Mammary epithelial cell (primary cell): ENCODE measurements at regions of chr13 and their contacts with region 1.

Region 1: DNA sequence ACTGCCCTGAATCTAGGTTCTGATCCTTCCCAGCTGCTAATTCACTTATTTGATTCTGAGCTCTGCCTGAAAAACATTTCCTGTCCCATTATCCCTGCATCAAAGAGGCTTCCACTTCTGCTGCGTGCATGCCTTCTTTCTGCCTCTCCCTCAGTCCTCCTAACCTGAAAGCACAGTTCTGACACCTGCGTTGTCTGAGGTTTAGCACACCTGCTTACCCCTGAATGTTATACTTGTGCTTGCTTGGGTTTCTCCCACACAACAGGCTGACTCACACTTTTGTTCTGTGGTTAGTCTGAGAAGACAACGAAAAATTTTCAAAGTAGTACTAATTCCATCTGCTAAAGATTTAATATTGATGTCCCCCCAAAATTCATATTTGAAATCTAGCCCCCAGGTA is 3.1 kb upstream of the SOHLH2 start:
- DNase-seq: peak; percentile 76
- H3K4me3 ChIP-seq: no peak overlapping the region
- H3K27ac ChIP-seq: no peak overlapping the region
- H3K4me1 ChIP-seq: no peaks in the 10 kb centered on the region
- H3K27me3 ChIP-seq: peaks cover 3% of the 10 kb centered on the region
- CTCF ChIP-seq: no peak

Region 2: DNA sequence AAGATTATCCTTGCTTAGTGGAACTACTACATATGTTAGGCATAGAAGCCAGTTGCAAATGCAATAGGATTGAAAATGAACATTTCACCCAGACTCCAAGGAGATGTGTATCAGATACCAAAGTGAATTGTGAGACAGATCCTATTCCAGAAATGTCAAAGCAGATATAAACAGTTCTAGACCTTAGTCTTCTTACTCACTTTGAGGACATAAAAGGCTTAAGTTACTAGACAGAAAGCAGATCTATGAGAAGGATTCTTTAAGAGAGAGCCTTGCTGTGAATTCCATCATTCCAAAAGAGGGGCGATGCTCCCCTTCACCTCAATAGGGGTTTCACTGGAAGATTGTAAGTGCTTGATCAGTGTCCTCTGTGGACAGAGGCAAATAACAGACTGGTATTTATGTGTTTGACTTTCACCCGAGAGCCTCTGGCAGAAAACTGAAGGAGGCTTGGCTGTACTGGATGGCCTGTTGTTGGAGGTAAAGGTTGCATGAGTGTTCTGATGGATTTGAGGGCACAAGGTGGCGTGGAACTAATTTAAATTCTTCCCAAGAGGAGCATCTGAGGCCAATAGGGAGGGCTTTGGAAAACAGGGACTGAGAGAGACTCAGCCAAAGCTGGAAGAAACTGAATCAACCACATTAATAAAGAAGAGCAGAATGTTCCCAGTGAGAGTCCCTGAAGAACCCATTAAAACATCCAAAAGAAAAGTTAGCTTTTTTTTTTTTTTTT is 281.0 kb before region 1 on chr13:
- CTCF ChIA-PET with region 1: no interaction called
- dilution Hi-C with region 1: no loop called
- in situ Hi-C with region 1: no loop called
- intact Hi-C with region 1: no loop called
- DNase-seq: no peak
- H3K4me3 ChIP-seq: no peak overlapping the region
- H3K27ac ChIP-seq: no peak overlapping the region
- H3K4me1 ChIP-seq: no peaks in the 10 kb centered on the region
- H3K27me3 ChIP-seq: no peaks in the 10 kb centered on the region
- CTCF ChIP-seq: no peak

Region 3: DNA sequence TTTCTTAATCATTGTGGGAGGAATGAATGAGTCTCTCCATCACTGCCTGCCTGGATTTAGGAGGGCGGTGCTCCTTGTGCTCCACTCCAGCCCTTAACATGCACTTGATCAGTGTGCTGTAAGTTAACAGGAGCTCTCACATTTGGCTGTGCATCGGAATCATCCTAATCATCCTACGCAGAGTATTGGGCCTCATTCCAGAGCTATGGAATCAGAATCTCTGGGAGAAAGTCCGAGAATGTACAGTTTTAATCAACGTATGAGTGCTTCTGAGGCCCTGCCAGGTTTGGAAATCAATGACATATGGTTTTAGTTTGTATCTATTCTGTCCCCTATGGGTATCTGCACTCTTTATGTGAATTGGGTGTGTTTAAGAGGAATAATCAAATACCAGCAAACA is 51.4 kb before region 1 on chr13:
- CTCF ChIA-PET with region 1: no interaction called
- dilution Hi-C with region 1: loop called (anchors 5 kb)
- in situ Hi-C with region 1: no loop called
- intact Hi-C with region 1: no loop called
- DNase-seq: no peak
- H3K4me3 ChIP-seq: no peak overlapping the region
- H3K27ac ChIP-seq: no peak overlapping the region
- H3K4me1 ChIP-seq: peaks cover 11% of the 10 kb centered on the region
- H3K27me3 ChIP-seq: no peaks in the 10 kb centered on the region
- CTCF ChIP-seq: no peak

Region 4: GRCh38 chr13:36275190-36276002 is 57.9 kb after region 1 on chr13:
- CTCF ChIA-PET with region 1: no interaction called
- dilution Hi-C with region 1: no loop called
- in situ Hi-C with region 1: no loop called
- intact Hi-C with region 1: no loop called
- DNase-seq: no peak
- H3K4me3 ChIP-seq: no peak overlapping the region
- H3K27ac ChIP-seq: no peak overlapping the region
- H3K4me1 ChIP-seq: no peaks in the 10 kb centered on the region
- H3K27me3 ChIP-seq: no peaks in the 10 kb centered on the region
- CTCF ChIP-seq: peak; percentile 54 to 63

Region 5: DNA sequence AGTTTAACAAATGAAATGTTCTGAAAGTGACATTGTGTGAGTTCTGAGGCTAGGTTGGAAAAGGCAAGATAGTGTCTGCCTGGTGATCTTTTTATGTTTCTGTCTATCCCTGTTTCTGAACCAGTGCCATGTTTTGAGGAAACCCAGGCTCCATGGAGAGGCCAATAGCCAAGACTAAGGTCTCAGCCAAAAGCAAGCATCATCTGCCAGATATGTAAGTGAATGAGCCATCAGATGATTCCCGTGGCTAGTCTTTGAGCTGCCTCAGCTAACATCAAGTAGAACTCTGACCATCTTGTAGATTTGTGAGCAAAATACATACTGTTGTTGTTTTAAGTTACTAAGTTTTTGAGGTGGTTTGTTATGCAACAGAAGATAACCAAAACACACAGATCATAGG is 195.3 kb after region 1 on chr13:
- CTCF ChIA-PET with region 1: no interaction called
- dilution Hi-C with region 1: no loop called
- in situ Hi-C with region 1: no loop called
- intact Hi-C with region 1: no loop called
- DNase-seq: no peak
- H3K4me3 ChIP-seq: no peak overlapping the region
- H3K27ac ChIP-seq: no peak overlapping the region
- H3K4me1 ChIP-seq: peaks cover 13% of the 10 kb centered on the region
- H3K27me3 ChIP-seq: no peaks in the 10 kb centered on the region
- CTCF ChIP-seq: no peak